ENCODE measurements at regions of chr6 and their contacts with region 1.

Region 1: DNA sequence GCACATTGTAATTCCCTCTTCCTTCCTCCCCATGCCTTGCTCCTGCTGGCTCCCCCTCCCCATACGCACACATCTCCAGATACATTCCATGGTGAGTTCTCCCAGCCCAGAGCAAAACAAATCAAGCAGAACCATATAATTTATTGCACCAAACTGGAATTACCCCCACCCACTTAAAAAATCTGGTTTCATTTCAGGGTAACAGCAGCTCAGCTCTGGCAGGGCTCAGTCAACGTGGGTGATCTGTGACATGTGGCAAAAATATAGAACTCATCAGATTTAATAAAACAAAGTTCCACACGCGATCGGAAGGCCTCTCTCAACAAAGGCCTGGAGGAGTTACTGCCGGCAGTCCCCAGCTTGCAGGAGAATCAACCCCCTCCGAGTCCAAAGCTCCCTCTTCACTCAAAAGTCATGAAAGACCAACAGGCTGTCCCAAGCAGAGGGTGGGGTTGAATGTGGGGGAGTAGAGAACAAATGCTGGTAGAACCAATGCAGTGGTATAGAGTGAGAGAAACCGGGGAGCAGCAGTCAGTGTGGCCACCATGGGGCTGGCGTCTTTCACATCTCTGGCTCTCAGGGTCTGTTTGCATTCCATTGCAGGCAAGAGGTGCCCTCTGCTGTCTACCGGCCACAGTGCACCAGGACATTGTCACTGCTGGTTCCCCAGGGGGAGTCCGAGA is 323.3 kb upstream of the NT5E start:
- DNase-seq: peak; percentile 39 to 62 (median 48)
- ATAC-seq: peak; percentile 100
- H3K4me3 ChIP-seq: no peak overlapping the region
- H3K27ac ChIP-seq: no peak overlapping the region
- H3K4me1 ChIP-seq: no peaks in the 10 kb centered on the region; a peak in 1 of 5 replicates
- H3K27me3 ChIP-seq: no peaks in the 10 kb centered on the region
- CTCF ChIP-seq: peak; percentile 81 to 89 (median 82)
- EP300 ChIP-seq: no peak
- POLR2A ChIP-seq: no peak
- RAD21 ChIP-seq: peak; percentile 89 to 93

Region 2: GRCh38 chr6:84764332-84765049 is 362.1 kb before region 1 on chr6 and contains the start of gene TBX18:
- CTCF ChIA-PET with region 1: no interaction called
- POLR2A ChIA-PET with region 1: no interaction called
- in situ Hi-C with region 1: no loop called
- intact Hi-C with region 1: loop called (anchors 10 kb)
- DNase-seq: peak; percentile 93 to 98 (median 94)
- ATAC-seq: peak; percentile 87
- H3K4me3 ChIP-seq: peak within 1 kb of the TSS; percentile 78
- H3K27ac ChIP-seq: peak within 1 kb of the TSS; percentile 87
- H3K4me1 ChIP-seq: peaks cover 7 to 15% of the 10 kb centered on the region in 2 experiments; a peak in 3 of 5 replicates
- H3K27me3 ChIP-seq: no peaks in the 10 kb centered on the region
- CTCF ChIP-seq: peak; percentile 28 to 33 (median 31); a peak in 4 of 6 replicates
- EP300 ChIP-seq: peak; percentile 47; the same call in 1 of the 2 replicates
- POLR2A ChIP-seq: peak; percentile 84
- RAD21 ChIP-seq: no peak; a peak in 1 of 4 replicates
- polyA plus RNA-seq, gene TBX18: 4.0 to 4.8 TPM

Region 3: GRCh38 chr6:84791233-84791632 is 335.4 kb before region 1 on chr6:
- CTCF ChIA-PET with region 1: no interaction called
- POLR2A ChIA-PET with region 1: no interaction called
- in situ Hi-C with region 1: no loop called
- intact Hi-C with region 1: no loop called
- DNase-seq: peak; percentile 51 to 83 (median 69)
- ATAC-seq: peak; percentile 94
- H3K4me3 ChIP-seq: peak overlapping the region; percentile 7; the same call in 1 of the 2 replicates
- H3K27ac ChIP-seq: peak overlapping the region; percentile 68
- H3K4me1 ChIP-seq: peaks cover 0 to 18% of the 10 kb centered on the region in 2 experiments; a peak in 2 of 5 replicates
- H3K27me3 ChIP-seq: no peaks in the 10 kb centered on the region
- CTCF ChIP-seq: no peak
- EP300 ChIP-seq: peak; percentile 69
- POLR2A ChIP-seq: peak; percentile 40; the same call in 1 of the 2 replicates
- RAD21 ChIP-seq: no peak

Region 4: GRCh38 chr6:84825461-84825860 is 301.2 kb before region 1 on chr6:
- CTCF ChIA-PET with region 1: no interaction called
- POLR2A ChIA-PET with region 1: no interaction called
- in situ Hi-C with region 1: no loop called
- intact Hi-C with region 1: no loop called
- DNase-seq: peak in 2 of 4 experiments; percentile 9 to 26
- ATAC-seq: no peak
- H3K4me3 ChIP-seq: no peak overlapping the region
- H3K27ac ChIP-seq: no peak overlapping the region
- H3K4me1 ChIP-seq: 0 out of 5 replicates have a peak, but pooled peaks cover 0 to 4% of the 10 kb centered on the region in 2 experiments
- H3K27me3 ChIP-seq: no peaks in the 10 kb centered on the region
- CTCF ChIP-seq: no peak
- EP300 ChIP-seq: no peak
- POLR2A ChIP-seq: no peak
- RAD21 ChIP-seq: no peak

Region 5: GRCh38 chr6:85015396-85015990 is 111.1 kb before region 1 on chr6:
- CTCF ChIA-PET with region 1: no interaction called
- POLR2A ChIA-PET with region 1: no interaction called
- in situ Hi-C with region 1: no loop called
- intact Hi-C with region 1: loop called (anchors 5 kb)
- DNase-seq: peak; percentile 45 to 75 (median 56)
- ATAC-seq: peak; percentile 100
- H3K4me3 ChIP-seq: no peak overlapping the region
- H3K27ac ChIP-seq: no peak overlapping the region
- H3K4me1 ChIP-seq: no peaks in the 10 kb centered on the region
- H3K27me3 ChIP-seq: no peaks in the 10 kb centered on the region
- CTCF ChIP-seq: peak; percentile 82 to 98 (median 87)
- EP300 ChIP-seq: no peak
- POLR2A ChIP-seq: no peak
- RAD21 ChIP-seq: peak; percentile 68 to 76

Region 6: DNA sequence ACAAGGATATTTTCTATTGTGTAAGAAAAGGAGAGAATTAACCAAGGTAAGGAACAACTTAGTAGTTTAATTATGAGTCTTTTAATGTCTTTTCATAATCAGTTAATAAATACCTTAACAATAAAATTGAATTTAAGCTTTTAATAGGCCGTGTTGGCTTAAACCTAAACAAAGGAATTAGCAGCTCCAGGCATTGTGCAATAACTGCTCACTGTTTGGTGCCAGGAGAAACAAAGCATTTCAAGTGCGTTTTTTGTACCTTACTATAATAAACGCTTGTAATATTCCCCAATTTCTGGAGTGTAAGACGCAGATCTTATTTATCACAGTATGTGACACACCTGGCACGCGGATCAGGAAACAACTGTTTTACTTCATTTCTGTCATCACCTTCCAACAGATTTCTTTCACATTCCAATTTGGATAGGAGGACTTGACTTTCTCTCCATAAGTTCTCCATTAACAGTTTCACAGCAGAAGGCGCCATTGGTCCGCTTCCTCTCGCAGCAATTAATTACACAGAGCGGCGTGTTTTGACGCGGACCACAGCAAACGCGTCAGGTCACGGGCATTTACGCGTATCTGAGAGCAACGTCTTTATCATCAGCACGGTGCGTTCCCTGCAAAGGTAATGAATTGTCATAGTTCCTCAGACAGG is 12.6 kb before region 1 on chr6:
- CTCF ChIA-PET with region 1: no interaction called
- POLR2A ChIA-PET with region 1: no interaction called
- in situ Hi-C with region 1: no loop called
- intact Hi-C with region 1: no loop called
- DNase-seq: peak in 1 of 4 experiments; percentile 29
- ATAC-seq: no peak
- H3K4me3 ChIP-seq: no peak overlapping the region
- H3K27ac ChIP-seq: no peak overlapping the region
- H3K4me1 ChIP-seq: no peaks in the 10 kb centered on the region
- H3K27me3 ChIP-seq: peaks cover 0 to 4% of the 10 kb centered on the region in 2 experiments; a peak in 1 of 5 replicates
- CTCF ChIP-seq: no peak
- EP300 ChIP-seq: no peak
- POLR2A ChIP-seq: no peak
- RAD21 ChIP-seq: no peak

Region 7: GRCh38 chr6:85323435-85324040 is 196.9 kb after region 1 on chr6:
- CTCF ChIA-PET with region 1: no interaction called
- POLR2A ChIA-PET with region 1: no interaction called
- in situ Hi-C with region 1: no loop called
- intact Hi-C with region 1: loop called (anchors 1 kb)
- DNase-seq: peak; percentile 37 to 82 (median 56)
- ATAC-seq: peak; percentile 92
- H3K4me3 ChIP-seq: no peak overlapping the region
- H3K27ac ChIP-seq: no peak overlapping the region
- H3K4me1 ChIP-seq: no peaks in the 10 kb centered on the region
- H3K27me3 ChIP-seq: no peaks in the 10 kb centered on the region
- CTCF ChIP-seq: peak; percentile 68 to 84 (median 83)
- EP300 ChIP-seq: no peak
- POLR2A ChIP-seq: no peak
- RAD21 ChIP-seq: peak; percentile 74 to 83

Measured in K562 (cell line).